Motor neuron (in vitro differentiated cells): ENCODE measurements at regions of chr13 and their contacts with region 1.

Region 1: DNA sequence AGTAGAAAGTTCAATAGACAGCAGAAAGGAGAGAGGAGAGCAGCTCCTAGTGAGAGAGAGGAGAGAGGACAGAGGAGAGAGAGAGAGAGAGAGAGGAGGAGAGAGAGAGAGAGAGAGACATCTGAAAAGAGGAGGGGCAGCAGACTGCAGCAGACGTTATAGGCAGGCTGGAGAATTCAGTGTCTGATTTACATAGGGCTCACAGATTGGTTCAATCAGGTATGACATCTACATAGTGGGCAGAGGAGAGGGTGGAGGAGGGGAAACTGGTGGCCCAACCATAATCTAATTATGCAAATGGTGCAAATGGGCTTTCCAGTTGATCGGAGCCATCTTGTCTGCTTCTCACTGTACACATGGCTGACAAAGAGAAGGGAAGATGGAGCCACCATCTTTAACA is 221.3 kb upstream of the TRPC4 start:
- ATAC-seq: peak in 4 of 8 experiments; percentile 36 to 65 (median 48)
- H3K4me3 ChIP-seq: no peak overlapping the region
- H3K27ac ChIP-seq: no peak overlapping the region
- H3K4me1 ChIP-seq: no peaks in the 10 kb centered on the region

Region 2: DNA sequence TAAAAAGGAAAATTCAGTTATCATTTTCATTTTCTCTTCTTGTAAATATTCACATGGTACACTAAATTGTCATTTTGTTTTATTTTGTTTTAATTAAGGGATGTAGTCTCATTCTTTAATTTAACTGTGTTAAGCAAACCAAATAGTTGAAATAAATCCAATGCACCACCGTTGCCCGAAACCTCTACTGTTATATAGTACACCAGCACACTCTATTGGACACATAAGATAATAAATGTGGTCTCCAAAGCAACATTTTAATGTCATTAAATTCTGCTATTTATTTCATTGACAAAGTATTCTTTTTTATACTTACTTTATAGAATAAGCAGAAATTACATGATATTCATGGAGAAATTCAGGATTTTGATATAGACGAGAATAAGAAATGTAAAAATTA is 439.6 kb after region 1 on chr13:
- in situ Hi-C with region 1: loop called in 1 of 9 experiments (anchors 25 kb)
- ATAC-seq: peak in 4 of 8 experiments; percentile 39 to 52 (median 45)
- H3K4me3 ChIP-seq: no peak overlapping the region
- H3K27ac ChIP-seq: no peak overlapping the region
- H3K4me1 ChIP-seq: no peaks in the 10 kb centered on the region